Calu3 (cell line): ENCODE measurements at regions of chr13 and their contacts with region 1.

Region 1: GRCh38 chr13:104106705-104107393 is 1040.6 kb upstream of the SLC10A2 start:
- DNase-seq: peak; percentile 60
- H3K4me3 Mint-ChIP-seq: peak overlapping the region; percentile 9
- H3K27ac Mint-ChIP-seq: peak overlapping the region; percentile 83
- H3K4me1 Mint-ChIP-seq: no peaks in the 10 kb centered on the region
- H3K27me3 Mint-ChIP-seq: no peaks in the 10 kb centered on the region
- CTCF ChIP-seq: no peak

Region 2: DNA sequence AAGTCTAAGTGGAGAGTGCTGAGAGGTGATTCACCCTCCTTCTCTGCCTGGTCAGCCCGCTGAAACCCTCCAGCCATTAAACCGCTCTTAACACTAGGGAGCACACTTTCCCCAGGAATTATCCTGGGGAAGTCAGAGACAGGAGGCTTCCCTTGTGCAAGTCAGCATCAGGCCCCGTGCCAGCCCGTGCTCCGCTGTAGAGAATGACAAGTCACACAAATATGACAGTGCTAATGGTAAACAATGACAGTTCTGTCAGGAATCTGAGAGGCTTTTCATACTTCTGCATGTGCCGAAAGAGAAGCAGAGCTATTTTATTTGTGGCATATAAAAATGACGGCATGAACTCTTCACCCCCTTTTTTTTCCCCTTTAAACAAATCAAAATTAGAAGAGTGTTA is 223.7 kb before region 1 on chr13:
- CTCF ChIA-PET with region 1: interaction called, 3 read pairs
- intact Hi-C with region 1: loop called (anchors 1 kb)
- DNase-seq: peak; percentile 83
- H3K4me3 Mint-ChIP-seq: no peak overlapping the region
- H3K27ac Mint-ChIP-seq: peak overlapping the region; percentile 92
- H3K4me1 Mint-ChIP-seq: peaks cover 17% of the 10 kb centered on the region
- H3K27me3 Mint-ChIP-seq: no peaks in the 10 kb centered on the region
- CTCF ChIP-seq: no peak

Region 3: GRCh38 chr13:103898481-103898880 is 208.4 kb before region 1 on chr13:
- CTCF ChIA-PET with region 1: no interaction called
- intact Hi-C with region 1: loop called (anchors 5 kb)
- DNase-seq: no peak
- H3K4me3 Mint-ChIP-seq: no peak overlapping the region
- H3K27ac Mint-ChIP-seq: no peak overlapping the region
- H3K4me1 Mint-ChIP-seq: no peaks in the 10 kb centered on the region
- H3K27me3 Mint-ChIP-seq: no peaks in the 10 kb centered on the region
- CTCF ChIP-seq: no peak

Region 4: DNA sequence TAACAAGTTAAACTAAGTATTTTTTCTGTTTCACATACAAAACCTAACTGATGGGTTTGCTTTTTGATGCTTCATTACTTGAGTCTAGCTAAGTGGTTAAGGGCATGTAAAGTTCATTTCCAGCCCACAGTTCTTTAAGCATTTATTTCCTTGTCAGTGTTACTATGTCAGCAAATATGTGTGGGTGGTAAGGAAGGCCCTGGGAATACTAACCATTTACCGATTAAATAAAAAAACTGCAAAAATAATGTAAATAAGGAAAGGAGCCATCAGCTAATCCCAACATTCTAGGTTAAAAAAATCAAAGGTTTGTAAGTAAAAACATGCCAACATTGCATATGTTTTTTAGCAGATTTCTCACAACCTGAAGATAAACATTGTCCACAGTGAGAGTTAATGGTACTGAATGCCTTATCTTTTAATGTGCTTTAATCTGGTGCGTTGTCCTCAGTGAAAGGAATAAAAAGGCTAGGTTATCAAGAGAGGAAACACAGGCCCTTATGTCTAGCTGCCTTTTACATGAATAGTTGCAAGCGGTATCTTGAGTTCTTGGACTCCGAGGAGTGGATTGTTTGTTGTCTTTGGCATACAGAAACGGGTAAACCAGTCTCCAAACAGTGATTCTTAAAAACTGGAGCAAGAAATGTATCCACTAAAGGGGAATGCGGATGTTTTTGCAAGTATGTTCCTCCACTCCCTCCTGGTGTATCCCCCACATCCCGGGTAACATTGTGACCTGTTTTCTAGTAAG is 91.0 kb before region 1 on chr13:
- CTCF ChIA-PET with region 1: interaction called, 6 read pairs
- intact Hi-C with region 1: loop called (anchors 1 kb)
- DNase-seq: peak; percentile 19
- H3K4me3 Mint-ChIP-seq: no peak overlapping the region
- H3K27ac Mint-ChIP-seq: peak overlapping the region; percentile 84
- H3K4me1 Mint-ChIP-seq: no peaks in the 10 kb centered on the region
- H3K27me3 Mint-ChIP-seq: no peaks in the 10 kb centered on the region
- CTCF ChIP-seq: no peak

Region 5: GRCh38 chr13:104143760-104144416 is 37.0 kb after region 1 on chr13:
- CTCF ChIA-PET with region 1: no interaction called
- intact Hi-C with region 1: loop called (anchors 5 kb)
- DNase-seq: peak; percentile 9
- H3K4me3 Mint-ChIP-seq: peak overlapping the region; percentile 55
- H3K27ac Mint-ChIP-seq: peak overlapping the region; percentile 67
- H3K4me1 Mint-ChIP-seq: peaks cover 8% of the 10 kb centered on the region
- H3K27me3 Mint-ChIP-seq: no peaks in the 10 kb centered on the region
- CTCF ChIP-seq: no peak

Region 6: GRCh38 chr13:104318121-104318520 is 211.3 kb after region 1 on chr13:
- CTCF ChIA-PET with region 1: no interaction called
- intact Hi-C with region 1: loop called (anchors 5 kb)
- DNase-seq: no peak
- H3K4me3 Mint-ChIP-seq: no peak overlapping the region
- H3K27ac Mint-ChIP-seq: no peak overlapping the region
- H3K4me1 Mint-ChIP-seq: no peaks in the 10 kb centered on the region
- H3K27me3 Mint-ChIP-seq: no peaks in the 10 kb centered on the region
- CTCF ChIP-seq: no peak

Region 7: GRCh38 chr13:104586051-104586746 is 479.4 kb after region 1 on chr13:
- CTCF ChIA-PET with region 1: no interaction called
- intact Hi-C with region 1: loop called (anchors 10 kb)
- DNase-seq: peak; percentile 17
- H3K4me3 Mint-ChIP-seq: peak overlapping the region; percentile 66
- H3K27ac Mint-ChIP-seq: peak overlapping the region; percentile 98
- H3K4me1 Mint-ChIP-seq: peaks cover 8% of the 10 kb centered on the region
- H3K27me3 Mint-ChIP-seq: no peaks in the 10 kb centered on the region
- CTCF ChIP-seq: no peak